CD4-positive, alpha-beta memory T cell (primary cell): ENCODE measurements at regions of chr11 and their contacts with region 1.

Region 1: DNA sequence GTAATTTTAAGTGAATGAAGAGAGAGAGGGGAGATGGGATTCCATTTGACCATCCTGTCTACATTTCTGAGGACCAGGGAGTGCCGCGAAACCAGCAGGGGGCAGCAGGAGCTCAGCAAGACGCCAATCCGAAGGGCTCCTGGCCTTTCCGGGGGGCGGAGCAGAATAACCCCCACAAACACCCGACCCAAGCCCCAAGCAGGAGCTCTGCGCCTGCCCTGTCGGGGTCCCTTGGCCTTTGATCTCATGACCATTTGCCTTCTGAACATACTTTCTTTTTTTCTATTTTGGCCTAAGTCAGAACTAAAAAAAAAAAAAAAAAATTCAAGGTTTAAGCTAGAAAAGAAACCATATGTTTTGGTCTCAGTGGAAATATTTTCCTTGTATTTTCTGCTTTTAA is 21.9 kb upstream of the SCN2B start:
- DNase-seq: peak; percentile 69 to 81 (median 76)
- H3K4me3 ChIP-seq: no peak overlapping the region
- H3K4me3 Mint-ChIP-seq: peak overlapping the region in 7 of 8 donors; percentile 13 to 70 (median 47)
- H3K27ac ChIP-seq: peak overlapping the region; percentile 27
- H3K27ac Mint-ChIP-seq: peak overlapping the region in 6 of 7 donors; percentile 26 to 93 (median 77)
- H3K4me1 ChIP-seq: peaks cover 47% of the 10 kb centered on the region
- H3K4me1 Mint-ChIP-seq: peaks cover 3 to 14% (median 9%) of the 10 kb centered on the region in 4 donors
- H3K27me3 ChIP-seq: no peaks in the 10 kb centered on the region
- H3K27me3 Mint-ChIP-seq: no peaks in the 10 kb centered on the region

Region 2: GRCh38 chr11:117959438-117960149 is 238.8 kb before region 1 on chr11:
- CTCF ChIA-PET with region 1: no interaction called
- POLR2A ChIA-PET with region 1: no interaction called
- intact Hi-C with region 1: no loop called
- DNase-seq: no peak
- H3K4me3 ChIP-seq: no peak overlapping the region
- H3K4me3 Mint-ChIP-seq: peak overlapping the region in 3 of 8 donors; percentile 10 to 68 (median 51)
- H3K27ac ChIP-seq: no peak overlapping the region
- H3K27ac Mint-ChIP-seq: peak overlapping the region in 4 of 7 donors; percentile 33 to 72 (median 35)
- H3K4me1 ChIP-seq: peaks cover 21% of the 10 kb centered on the region
- H3K4me1 Mint-ChIP-seq: peaks cover 31 to 59% (median 47%) of the 10 kb centered on the region in 4 donors
- H3K27me3 ChIP-seq: no peaks in the 10 kb centered on the region
- H3K27me3 Mint-ChIP-seq: no peaks in the 10 kb centered on the region

Region 3: GRCh38 chr11:118051611-118052461 is 146.5 kb before region 1 on chr11:
- CTCF ChIA-PET with region 1: no interaction called
- POLR2A ChIA-PET with region 1: no interaction called
- intact Hi-C with region 1: no loop called
- DNase-seq: peak; percentile 86 to 91 (median 89)
- H3K4me3 ChIP-seq: peak overlapping the region in 1 of 2 donors; percentile 33
- H3K4me3 Mint-ChIP-seq: peak overlapping the region in 7 of 8 donors; percentile 69 to 93 (median 80)
- H3K27ac ChIP-seq: peak overlapping the region; percentile 57
- H3K27ac Mint-ChIP-seq: peak overlapping the region; percentile 95 to 100 (median 99)
- H3K4me1 ChIP-seq: peaks cover 67% of the 10 kb centered on the region
- H3K4me1 Mint-ChIP-seq: peaks cover 45 to 68% (median 59%) of the 10 kb centered on the region in 4 donors
- H3K27me3 ChIP-seq: no peaks in the 10 kb centered on the region
- H3K27me3 Mint-ChIP-seq: peaks cover 0 to 2% of the 10 kb centered on the region in 2 donors

Region 4: GRCh38 chr11:118216621-118217481 is 18.5 kb after region 1 on chr11:
- CTCF ChIA-PET with region 1: interaction called, 52 read pairs
- POLR2A ChIA-PET with region 1: interaction called, 83 read pairs
- intact Hi-C with region 1: loop called (anchors 2 kb)
- DNase-seq: peak in 1 of 5 donors; percentile 73
- H3K4me3 ChIP-seq: peak overlapping the region; percentile 2 to 35
- H3K4me3 Mint-ChIP-seq: peak overlapping the region; percentile 73 to 91 (median 87)
- H3K27ac ChIP-seq: peak overlapping the region; percentile 50
- H3K27ac Mint-ChIP-seq: peak overlapping the region; percentile 90 to 96 (median 93)
- H3K4me1 ChIP-seq: peaks cover 90% of the 10 kb centered on the region
- H3K4me1 Mint-ChIP-seq: peaks cover 62 to 100% (median 84%) of the 10 kb centered on the region in 4 donors
- H3K27me3 ChIP-seq: no peaks in the 10 kb centered on the region
- H3K27me3 Mint-ChIP-seq: no peaks in the 10 kb centered on the region

Region 5: GRCh38 chr11:118247047-118247446 is 48.7 kb after region 1 on chr11:
- CTCF ChIA-PET with region 1: interaction called, 36 read pairs
- POLR2A ChIA-PET with region 1: interaction called, 43 read pairs
- intact Hi-C with region 1: no loop called
- DNase-seq: no peak
- H3K4me3 ChIP-seq: no peak overlapping the region
- H3K4me3 Mint-ChIP-seq: peak overlapping the region in 4 of 8 donors; percentile 6 to 45 (median 22)
- H3K27ac ChIP-seq: no peak overlapping the region
- H3K27ac Mint-ChIP-seq: peak overlapping the region; percentile 77 to 94 (median 87)
- H3K4me1 ChIP-seq: peaks cover 70% of the 10 kb centered on the region
- H3K4me1 Mint-ChIP-seq: peaks cover 53 to 88% (median 72%) of the 10 kb centered on the region in 4 donors
- H3K27me3 ChIP-seq: no peaks in the 10 kb centered on the region
- H3K27me3 Mint-ChIP-seq: peaks cover 0 to under 1% of the 10 kb centered on the region in 2 donors

Region 6: GRCh38 chr11:118277306-118277705 is 78.9 kb after region 1 on chr11:
- CTCF ChIA-PET with region 1: interaction called, 39 read pairs
- POLR2A ChIA-PET with region 1: interaction called, 4 read pairs
- intact Hi-C with region 1: no loop called
- DNase-seq: no peak
- H3K4me3 ChIP-seq: no peak overlapping the region
- H3K4me3 Mint-ChIP-seq: no peak overlapping the region
- H3K27ac ChIP-seq: no peak overlapping the region
- H3K27ac Mint-ChIP-seq: peak overlapping the region in 1 of 7 donors; percentile 45
- H3K4me1 ChIP-seq: peaks cover 10% of the 10 kb centered on the region
- H3K4me1 Mint-ChIP-seq: peaks cover 10 to 24% (median 17%) of the 10 kb centered on the region in 4 donors
- H3K27me3 ChIP-seq: no peaks in the 10 kb centered on the region
- H3K27me3 Mint-ChIP-seq: no peaks in the 10 kb centered on the region

Region 7: GRCh38 chr11:118304568-118305248 is 106.3 kb after region 1 on chr11 and contains the start of gene CD3E:
- CTCF ChIA-PET with region 1: interaction called, 18 read pairs
- POLR2A ChIA-PET with region 1: interaction called, 11 read pairs
- intact Hi-C with region 1: no loop called
- DNase-seq: peak; percentile 76 to 83 (median 79)
- H3K4me3 ChIP-seq: peak within 1 kb of the TSS; percentile 96 to 97
- H3K4me3 Mint-ChIP-seq: peak within 1 kb of the TSS; percentile 99 to 100 (median 100)
- H3K27ac ChIP-seq: peak within 1 kb of the TSS; percentile 91
- H3K27ac Mint-ChIP-seq: peak within 1 kb of the TSS; percentile 98 to 100 (median 99)
- H3K4me1 ChIP-seq: peaks cover 68% of the 10 kb centered on the region
- H3K4me1 Mint-ChIP-seq: peaks cover 46 to 94% (median 66%) of the 10 kb centered on the region in 4 donors
- H3K27me3 ChIP-seq: no peaks in the 10 kb centered on the region
- H3K27me3 Mint-ChIP-seq: no peaks in the 10 kb centered on the region
- total RNA-seq, gene CD3E: 581 to 618 TPM

Region 8: DNA sequence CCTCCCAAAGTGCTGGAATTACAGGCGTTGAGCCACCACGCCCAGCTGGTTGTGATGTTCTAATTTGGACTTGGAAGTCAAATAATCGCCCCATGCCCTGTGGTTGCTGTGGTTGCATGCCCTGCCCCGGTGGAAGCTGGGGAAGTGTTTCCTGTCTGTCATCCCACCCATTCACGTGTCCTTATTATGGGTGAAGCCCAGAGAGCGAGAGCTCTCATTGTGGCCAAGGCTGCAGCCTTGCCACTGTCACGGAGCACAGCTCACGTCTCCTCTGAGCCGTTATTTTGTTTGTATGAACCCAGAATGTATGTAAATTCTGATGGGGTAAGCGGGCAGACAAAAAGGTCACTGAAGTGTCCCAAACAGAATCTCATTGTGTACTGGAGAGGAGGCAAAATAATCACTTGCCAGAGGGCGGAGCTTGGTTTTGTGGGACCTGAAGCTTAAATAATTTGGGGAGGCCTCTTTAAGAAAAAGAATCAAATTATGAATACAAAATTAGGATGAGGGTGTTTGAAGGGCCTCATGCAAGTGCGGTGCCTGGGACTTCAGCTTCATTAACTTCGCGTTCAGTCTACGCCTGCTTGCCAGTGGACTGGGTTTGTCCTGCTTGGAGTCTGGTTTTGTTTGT is 506.9 kb after region 1 on chr11:
- CTCF ChIA-PET with region 1: no interaction called
- POLR2A ChIA-PET with region 1: no interaction called
- intact Hi-C with region 1: no loop called
- DNase-seq: peak; percentile 63 to 72 (median 70)
- H3K4me3 ChIP-seq: peak overlapping the region in 1 of 2 donors; percentile 29
- H3K4me3 Mint-ChIP-seq: peak overlapping the region; percentile 48 to 90 (median 74)
- H3K27ac ChIP-seq: peak overlapping the region; percentile 3
- H3K27ac Mint-ChIP-seq: peak overlapping the region; percentile 61 to 95 (median 89)
- H3K4me1 ChIP-seq: peaks cover 50% of the 10 kb centered on the region
- H3K4me1 Mint-ChIP-seq: peaks cover 27 to 48% (median 37%) of the 10 kb centered on the region in 4 donors
- H3K27me3 ChIP-seq: no peaks in the 10 kb centered on the region
- H3K27me3 Mint-ChIP-seq: no peaks in the 10 kb centered on the region